Posterior cingulate gyrus (tissue), 11 donors: ENCODE measurements at regions of chr5 and their contacts with region 1.

Region 1: DNA sequence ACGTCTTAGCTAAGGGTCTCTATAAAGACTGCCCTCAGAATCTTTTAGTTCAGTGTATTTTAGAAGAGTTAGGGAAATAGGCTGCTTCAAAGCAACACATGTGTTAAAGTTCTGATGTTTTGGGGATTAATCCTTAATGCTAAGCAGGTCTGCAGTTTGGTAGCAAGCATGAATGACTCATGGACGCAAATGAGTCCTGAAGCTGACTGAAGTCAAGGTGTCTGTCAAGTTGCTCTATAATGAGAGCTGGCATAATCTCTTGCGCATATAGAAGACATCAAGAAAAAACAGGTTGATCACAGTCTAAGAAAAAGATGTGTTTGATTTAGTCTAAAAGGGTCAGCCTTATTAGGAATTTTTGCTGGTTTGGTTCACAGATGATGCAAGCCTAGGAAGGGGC is 630.1 kb downstream of the CDH12 start:
- DNase-seq: no peak

Region 2: DNA sequence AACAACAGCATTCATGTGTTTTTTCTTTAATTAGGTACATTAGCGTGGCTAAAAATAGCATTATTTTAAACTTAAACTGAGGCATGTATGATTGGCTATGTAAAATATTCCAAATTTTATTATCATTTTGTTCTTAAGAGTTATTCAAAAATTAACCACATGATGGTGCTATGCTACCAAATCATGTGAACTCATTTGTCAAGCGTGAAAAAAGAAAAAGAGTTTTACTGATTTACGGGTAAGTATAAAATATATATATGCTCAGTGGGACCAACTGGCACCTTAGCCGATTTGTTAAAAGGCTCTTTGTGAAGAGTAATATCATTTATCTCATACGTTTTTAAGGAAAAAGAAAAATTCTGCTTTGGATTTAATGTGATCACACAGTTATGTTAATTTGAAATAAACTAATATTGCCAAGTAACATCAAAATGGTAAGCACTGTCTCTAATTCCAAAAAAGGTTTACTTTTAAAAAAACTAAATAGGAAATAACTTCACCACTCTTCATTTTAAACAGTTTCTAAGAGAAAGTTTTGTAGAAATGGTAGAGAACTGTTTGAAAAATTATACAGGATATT is 412.3 kb before region 1 on chr5:
- intact Hi-C with region 1: loop called (anchors 10 kb)
- DNase-seq: no peak

Region 3: DNA sequence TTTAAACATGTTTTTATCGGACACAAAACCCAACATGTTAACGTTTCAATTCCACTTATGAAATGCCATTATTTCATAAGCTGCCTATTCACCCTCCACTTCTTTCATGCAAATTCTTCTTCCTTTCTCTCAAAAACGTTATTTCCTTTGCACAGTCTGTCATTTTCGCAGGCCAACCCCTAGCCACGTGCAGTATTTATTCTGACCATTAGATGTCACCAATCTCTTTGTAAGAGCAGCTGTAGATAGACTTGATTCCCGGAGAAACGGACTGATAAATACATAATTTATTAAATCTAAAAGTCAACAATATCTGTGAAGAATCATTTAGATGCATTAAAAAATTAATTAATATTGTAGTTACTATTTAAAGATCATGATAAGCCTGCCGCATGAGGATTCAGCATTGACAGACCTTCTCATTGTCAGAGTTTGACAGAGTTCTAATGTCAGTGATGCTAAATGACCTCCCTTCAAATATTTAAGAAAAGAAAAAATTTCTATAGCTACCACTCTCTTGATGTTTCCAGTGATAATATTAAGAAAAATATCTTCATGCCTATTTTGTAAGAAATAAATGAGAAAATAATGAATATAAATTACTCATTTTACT is 303.6 kb before region 1 on chr5:
- intact Hi-C with region 1: loop called (anchors 10 kb)
- DNase-seq: no peak